ENCODE measurements at regions of chr1 and their contacts with region 1.

Region 1: GRCh38 chr1:55428944-55429931 is 214.1 kb upstream of the USP24 start:
- DNase-seq: peak; percentile 100
- ATAC-seq: peak; percentile 97
- H3K4me3 ChIP-seq: no peak overlapping the region
- H3K27ac ChIP-seq: peak overlapping the region; percentile 69
- H3K4me1 ChIP-seq: peaks cover 73% of the 10 kb centered on the region
- H3K27me3 ChIP-seq: no peaks in the 10 kb centered on the region
- CTCF ChIP-seq: no peak
- EP300 ChIP-seq: peak; percentile 95 to 96; a peak in 3 of 4 replicates
- POLR2A ChIP-seq: no peak
- RAD21 ChIP-seq: 0 out of 2 replicates have a peak, but pooled peaks have one; percentile 16

Region 2: GRCh38 chr1:55362558-55362957 is 66.7 kb before region 1 on chr1:
- CTCF ChIA-PET with region 1: no interaction called
- POLR2A ChIA-PET with region 1: no interaction called
- in situ Hi-C with region 1: no loop called
- intact Hi-C with region 1: no loop called
- DNase-seq: no peak
- ATAC-seq: no peak
- H3K4me3 ChIP-seq: no peak overlapping the region
- H3K27ac ChIP-seq: no peak overlapping the region
- H3K4me1 ChIP-seq: no peaks in the 10 kb centered on the region
- H3K27me3 ChIP-seq: peaks cover 0 to 6% of the 10 kb centered on the region in 2 experiments; a peak in 2 of 5 replicates
- CTCF ChIP-seq: no peak
- EP300 ChIP-seq: no peak
- POLR2A ChIP-seq: no peak
- RAD21 ChIP-seq: no peak

Region 3: DNA sequence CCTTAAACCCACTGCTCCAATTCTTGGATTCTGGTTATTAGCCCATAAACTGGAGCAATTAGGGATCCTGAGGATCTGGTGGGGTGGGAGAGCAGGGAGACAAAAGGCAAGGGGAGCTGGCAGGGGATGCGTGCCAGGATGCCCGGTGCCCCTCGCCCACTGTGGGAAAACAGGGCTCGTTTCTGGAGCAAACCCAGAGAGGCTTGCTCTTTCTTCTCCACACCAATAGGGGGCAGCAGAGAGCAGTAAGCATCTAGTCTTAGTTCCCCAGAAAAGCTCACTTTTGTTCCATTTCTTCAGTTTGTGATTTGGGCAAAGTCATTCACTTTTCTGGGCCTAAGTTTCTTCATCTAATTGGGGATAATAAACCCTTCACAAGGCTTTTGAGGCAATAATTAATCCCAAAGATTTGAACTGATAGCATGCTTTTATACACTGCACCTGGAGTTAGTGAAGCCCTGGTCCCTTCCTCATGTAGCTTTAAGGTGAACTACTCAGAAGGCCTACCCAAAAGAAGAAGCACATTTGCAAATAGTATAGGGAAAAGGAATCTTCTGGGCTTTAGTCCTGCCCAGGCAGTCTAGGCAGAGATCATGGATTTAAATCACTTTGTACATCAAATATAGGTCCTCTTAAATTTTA is 53.5 kb before region 1 on chr1:
- CTCF ChIA-PET with region 1: no interaction called
- POLR2A ChIA-PET with region 1: interaction called, 10 read pairs
- in situ Hi-C with region 1: no loop called
- intact Hi-C with region 1: loop called (anchors 1 kb)
- DNase-seq: peak; percentile 34
- ATAC-seq: peak; percentile 62
- H3K4me3 ChIP-seq: no peak overlapping the region
- H3K27ac ChIP-seq: no peak overlapping the region
- H3K4me1 ChIP-seq: no peaks in the 10 kb centered on the region
- H3K27me3 ChIP-seq: no peaks in the 10 kb centered on the region
- CTCF ChIP-seq: peak; percentile 76
- EP300 ChIP-seq: no peak
- POLR2A ChIP-seq: no peak
- RAD21 ChIP-seq: peak; percentile 52; the same call in 1 of the 2 replicates

Region 4: GRCh38 chr1:55447488-55447887 is 18.2 kb after region 1 on chr1:
- CTCF ChIA-PET with region 1: no interaction called
- POLR2A ChIA-PET with region 1: interaction called, 10 read pairs
- in situ Hi-C with region 1: no loop called
- intact Hi-C with region 1: no loop called
- DNase-seq: peak; percentile 35
- ATAC-seq: no peak
- H3K4me3 ChIP-seq: no peak overlapping the region
- H3K27ac ChIP-seq: no peak overlapping the region
- H3K4me1 ChIP-seq: no peaks in the 10 kb centered on the region; the same call in 1 of the 2 replicates
- H3K27me3 ChIP-seq: no peaks in the 10 kb centered on the region
- CTCF ChIP-seq: no peak
- EP300 ChIP-seq: peak in 1 of 2 experiments; percentile 48; a peak in 1 of 4 replicates
- POLR2A ChIP-seq: no peak
- RAD21 ChIP-seq: no peak

Region 5: GRCh38 chr1:55530749-55531478 is 101.7 kb after region 1 on chr1:
- CTCF ChIA-PET with region 1: no interaction called
- POLR2A ChIA-PET with region 1: interaction called, 21 read pairs
- in situ Hi-C with region 1: loop called (anchors 10 kb)
- intact Hi-C with region 1: loop called (anchors 5 kb)
- DNase-seq: peak; percentile 98
- ATAC-seq: peak; percentile 97
- H3K4me3 ChIP-seq: peak overlapping the region in 1 of 3 experiments; percentile 15; a peak in 1 of 6 replicates
- H3K27ac ChIP-seq: peak overlapping the region; percentile 92
- H3K4me1 ChIP-seq: peaks cover 100% of the 10 kb centered on the region
- H3K27me3 ChIP-seq: no peaks in the 10 kb centered on the region
- CTCF ChIP-seq: no peak
- EP300 ChIP-seq: peak; percentile 78 to 96
- POLR2A ChIP-seq: no peak; a peak in 1 of 4 replicates
- RAD21 ChIP-seq: no peak

Region 6: DNA sequence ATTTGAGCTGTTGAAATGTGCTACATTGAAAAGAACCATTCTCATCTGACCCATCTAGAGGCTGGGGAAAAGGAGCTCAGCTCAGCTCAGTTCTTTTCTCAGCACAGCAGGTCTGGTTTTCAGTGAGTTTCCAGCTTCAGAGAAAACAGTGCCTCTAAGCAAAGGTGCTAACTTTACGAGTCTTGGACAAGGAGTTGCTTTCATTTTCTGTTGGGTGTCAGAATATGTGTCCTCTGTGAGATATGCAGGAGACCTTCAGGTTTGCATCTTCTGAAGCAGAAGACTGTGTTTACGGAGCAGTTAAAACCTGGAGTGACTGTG is 107.3 kb after region 1 on chr1:
- CTCF ChIA-PET with region 1: no interaction called
- POLR2A ChIA-PET with region 1: interaction called, 3 read pairs
- in situ Hi-C with region 1: loop called (anchors 10 kb)
- intact Hi-C with region 1: loop called (anchors 5 kb)
- DNase-seq: no peak
- ATAC-seq: no peak
- H3K4me3 ChIP-seq: no peak overlapping the region
- H3K27ac ChIP-seq: peak overlapping the region; percentile 21
- H3K4me1 ChIP-seq: peaks cover 54% of the 10 kb centered on the region
- H3K27me3 ChIP-seq: no peaks in the 10 kb centered on the region
- CTCF ChIP-seq: no peak
- EP300 ChIP-seq: no peak
- POLR2A ChIP-seq: no peak
- RAD21 ChIP-seq: no peak

Region 7: DNA sequence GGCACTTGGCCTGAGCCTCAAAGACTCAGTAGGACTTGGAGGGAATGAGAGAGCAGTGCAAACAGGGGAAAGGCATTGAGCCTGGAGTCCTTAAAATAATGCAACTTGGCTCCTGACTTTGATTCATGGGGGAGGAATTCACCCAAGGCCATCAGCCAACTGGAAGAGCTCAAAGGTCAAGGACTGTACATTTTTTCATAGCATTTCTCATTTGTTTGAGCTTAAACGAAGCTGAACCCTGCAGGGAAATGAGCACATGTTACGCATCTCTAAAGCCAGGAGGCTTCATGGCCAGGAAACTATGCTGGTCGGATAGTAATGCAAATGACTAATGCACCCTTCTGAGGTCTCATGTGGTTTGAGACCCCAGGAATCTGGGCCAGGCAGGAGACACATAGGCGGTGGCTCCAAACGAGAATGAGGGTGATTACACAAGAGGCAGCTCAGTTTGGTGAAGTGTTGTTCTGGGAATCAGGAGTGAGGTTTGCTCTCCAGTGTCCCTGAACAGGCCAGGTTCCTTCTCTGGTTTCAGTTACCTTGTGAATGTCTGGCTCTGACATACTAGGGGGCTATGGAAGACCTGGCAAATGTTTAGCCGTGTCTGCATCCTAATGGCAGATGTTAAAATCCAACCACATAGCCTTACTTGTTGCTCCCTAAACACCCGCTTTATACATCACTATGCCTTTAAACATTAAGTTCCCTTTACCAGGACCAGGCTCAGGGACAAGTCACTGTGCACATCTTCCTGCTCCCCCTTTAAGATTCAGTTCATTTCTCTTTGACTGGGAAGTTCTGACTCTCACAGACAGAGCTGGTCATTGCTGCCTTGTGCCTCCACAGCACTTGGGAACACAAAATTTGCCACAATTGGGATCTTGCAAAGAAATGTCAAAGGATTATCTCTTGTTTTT is 289.8 kb after region 1 on chr1:
- CTCF ChIA-PET with region 1: no interaction called
- POLR2A ChIA-PET with region 1: interaction called, 11 read pairs
- in situ Hi-C with region 1: no loop called
- intact Hi-C with region 1: no loop called
- DNase-seq: peak; percentile 73
- ATAC-seq: peak; percentile 85
- H3K4me3 ChIP-seq: no peak overlapping the region; a peak in 1 of 6 replicates
- H3K27ac ChIP-seq: no peak overlapping the region
- H3K4me1 ChIP-seq: peaks cover 25% of the 10 kb centered on the region
- H3K27me3 ChIP-seq: no peaks in the 10 kb centered on the region
- CTCF ChIP-seq: no peak
- EP300 ChIP-seq: peak in 1 of 2 experiments; percentile 44; a peak in 2 of 4 replicates
- POLR2A ChIP-seq: no peak
- RAD21 ChIP-seq: no peak